ENCODE measurements at regions of chr15 and their contacts with region 1.

Region 1: GRCh38 chr15:31472636-31473384 is 146.2 kb downstream of the KLF13 start:
- DNase-seq: peak; percentile 78
- H3K4me3 Mint-ChIP-seq: peak overlapping the region; percentile 65
- H3K27ac Mint-ChIP-seq: peak overlapping the region; percentile 87
- H3K4me1 Mint-ChIP-seq: peaks cover 49% of the 10 kb centered on the region
- H3K27me3 Mint-ChIP-seq: no peaks in the 10 kb centered on the region

Region 2: GRCh38 chr15:31442203-31443111 is 30.4 kb before region 1 on chr15:
- CTCF ChIA-PET with region 1: interaction called, 29 read pairs
- POLR2A ChIA-PET with region 1: interaction called, 45 read pairs
- intact Hi-C with region 1: loop called (anchors 1 kb)
- DNase-seq: peak; percentile 41
- H3K4me3 Mint-ChIP-seq: peak overlapping the region; percentile 72
- H3K27ac Mint-ChIP-seq: peak overlapping the region; percentile 43
- H3K4me1 Mint-ChIP-seq: peaks cover 53% of the 10 kb centered on the region
- H3K27me3 Mint-ChIP-seq: no peaks in the 10 kb centered on the region

Region 3: DNA sequence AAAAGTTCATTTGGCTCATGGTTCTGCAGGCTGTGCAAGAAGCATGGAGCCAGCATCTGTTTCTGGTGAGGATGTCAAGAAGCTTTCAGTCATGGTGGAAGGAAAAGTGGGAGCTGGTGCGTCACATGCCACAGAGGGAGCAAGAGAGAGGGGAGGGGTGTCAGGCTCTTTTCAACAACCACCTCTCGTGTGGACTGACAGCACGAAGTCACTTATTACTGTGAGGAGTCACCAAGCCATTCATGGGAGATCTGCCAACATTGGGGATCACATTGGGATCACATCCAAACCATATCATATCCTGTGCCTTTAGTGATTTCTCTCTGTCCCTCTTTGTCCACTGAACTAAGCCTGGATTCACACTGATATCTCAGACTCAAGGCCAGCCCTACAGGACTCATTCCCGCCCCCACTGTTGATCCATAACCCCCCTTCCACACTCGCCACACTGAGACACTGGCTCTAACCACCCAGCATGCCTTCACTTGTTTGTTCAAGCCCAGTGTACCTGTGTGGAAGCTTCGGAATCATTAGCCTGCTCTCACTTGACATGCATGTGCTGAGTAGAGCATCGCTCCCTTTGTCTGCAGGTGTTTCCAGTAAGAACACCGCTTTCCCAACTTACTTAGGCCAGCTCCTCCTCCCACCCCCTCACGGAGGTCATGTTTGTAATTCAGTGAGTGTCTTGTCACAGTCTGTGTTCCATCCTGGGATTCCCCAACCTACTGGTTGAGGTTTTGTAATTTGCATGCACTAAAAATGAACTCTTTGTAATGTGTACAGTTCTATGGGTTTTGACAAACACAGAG is 14.0 kb before region 1 on chr15:
- CTCF ChIA-PET with region 1: interaction called, 15 read pairs
- POLR2A ChIA-PET with region 1: interaction called, 26 read pairs
- intact Hi-C with region 1: loop called (anchors 1 kb)
- DNase-seq: peak; percentile 84
- H3K4me3 Mint-ChIP-seq: peak overlapping the region; percentile 68
- H3K27ac Mint-ChIP-seq: peak overlapping the region; percentile 92
- H3K4me1 Mint-ChIP-seq: peaks cover 38% of the 10 kb centered on the region
- H3K27me3 Mint-ChIP-seq: no peaks in the 10 kb centered on the region

Region 4: DNA sequence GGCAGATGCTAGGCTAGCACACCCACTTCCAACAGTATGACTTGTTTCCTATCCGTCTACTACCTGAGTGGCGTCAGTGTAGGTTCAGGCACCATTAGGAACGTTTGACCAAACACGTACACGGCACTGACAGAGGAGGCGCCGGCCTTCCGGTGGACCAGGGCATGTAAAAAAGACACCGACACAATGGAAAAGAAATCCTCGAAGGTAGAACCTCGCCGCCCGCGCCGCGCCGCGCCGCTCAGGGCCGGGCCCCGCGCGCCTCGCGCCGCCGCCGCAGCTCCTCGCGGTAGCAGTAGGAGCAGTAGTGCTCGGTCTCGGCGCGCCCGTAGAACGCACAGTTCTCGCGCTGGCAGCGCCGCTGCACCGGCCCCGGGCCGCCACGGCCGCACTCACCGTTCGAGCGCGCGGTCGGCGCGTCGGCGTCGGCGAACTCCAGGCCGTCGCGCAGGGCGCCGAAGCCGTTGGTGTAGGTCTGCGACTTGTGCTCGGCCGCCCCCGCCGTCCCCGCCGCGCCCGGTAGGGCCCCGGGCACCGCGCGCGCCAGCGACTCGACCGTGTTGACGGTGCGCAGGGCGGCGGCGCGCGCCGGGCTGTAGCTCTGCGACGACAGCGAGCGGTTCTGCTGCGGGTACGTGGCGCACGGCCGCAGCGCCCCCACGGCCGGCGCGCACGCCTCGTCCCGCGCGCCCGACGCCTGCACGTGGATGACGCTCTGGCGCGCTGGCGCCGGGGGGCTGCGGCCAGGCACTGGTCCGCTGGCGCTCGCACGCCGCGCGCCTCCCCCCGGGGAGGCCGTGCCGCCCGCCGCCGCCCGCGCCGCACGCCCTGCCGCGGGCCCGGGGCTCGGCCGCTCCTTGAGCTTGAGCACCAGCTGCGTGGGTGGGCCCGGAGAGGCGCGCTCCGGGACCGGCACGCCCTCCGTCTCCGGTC is 10.5 kb after region 1 on chr15:
- CTCF ChIA-PET with region 1: interaction called, 90 read pairs
- POLR2A ChIA-PET with region 1: interaction called, 27 read pairs
- intact Hi-C with region 1: loop called (anchors 1 kb)
- DNase-seq: peak; percentile 73
- H3K4me3 Mint-ChIP-seq: peak overlapping the region; percentile 92
- H3K27ac Mint-ChIP-seq: peak overlapping the region; percentile 91
- H3K4me1 Mint-ChIP-seq: peaks cover 61% of the 10 kb centered on the region
- H3K27me3 Mint-ChIP-seq: peaks cover 5% of the 10 kb centered on the region

Measured in activated CD4-positive, alpha-beta memory T cell treated with anti-CD3 and anti-CD28 coated beads for 36 hours (primary cell).